HEK293 (cell line): ENCODE measurements at regions of chr11 and their contacts with region 1.

Region 1: DNA sequence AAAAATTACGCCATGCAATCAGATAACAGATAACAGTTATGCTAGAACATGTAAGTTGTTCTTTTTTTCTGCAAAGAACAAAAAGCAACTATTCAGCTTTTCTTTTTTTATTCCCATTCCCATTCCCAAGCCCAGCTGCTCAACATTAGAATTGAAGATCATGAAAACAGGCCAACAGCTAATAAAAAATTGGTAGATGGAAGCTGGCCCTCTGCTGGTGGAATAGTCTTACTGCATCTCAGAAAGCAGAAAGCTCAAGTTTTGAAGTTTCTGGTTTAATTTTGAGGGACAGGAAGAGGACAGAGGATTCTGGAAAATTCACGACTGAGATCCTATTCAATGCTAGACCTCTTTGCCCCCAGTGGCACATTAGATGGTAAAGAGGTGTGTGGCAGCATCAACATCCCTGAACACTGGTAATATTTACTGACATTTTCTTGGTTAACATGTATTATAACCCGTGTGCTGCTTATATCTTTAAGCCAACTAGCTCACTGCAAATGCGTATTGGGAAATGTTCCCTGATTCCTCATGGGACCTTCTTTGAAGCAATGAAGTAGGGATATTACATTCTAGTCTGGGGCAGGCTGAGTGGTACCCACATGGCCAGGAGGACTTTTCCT is 591.2 kb downstream of the OPCML start:
- H3K4me3 ChIP-seq: no peak overlapping the region
- H3K27ac ChIP-seq: no peak overlapping the region
- H3K4me1 ChIP-seq: no peaks in the 10 kb centered on the region
- CTCF ChIP-seq: no peak

Region 2: GRCh38 chr11:132858223-132858622 is 82.9 kb before region 1 on chr11:
- CTCF ChIA-PET with region 1: interaction called, 18 read pairs
- POLR2A ChIA-PET with region 1: no interaction called
- H3K4me3 ChIP-seq: no peak overlapping the region
- H3K27ac ChIP-seq: no peak overlapping the region
- H3K4me1 ChIP-seq: no peaks in the 10 kb centered on the region
- CTCF ChIP-seq: no peak

Region 3: DNA sequence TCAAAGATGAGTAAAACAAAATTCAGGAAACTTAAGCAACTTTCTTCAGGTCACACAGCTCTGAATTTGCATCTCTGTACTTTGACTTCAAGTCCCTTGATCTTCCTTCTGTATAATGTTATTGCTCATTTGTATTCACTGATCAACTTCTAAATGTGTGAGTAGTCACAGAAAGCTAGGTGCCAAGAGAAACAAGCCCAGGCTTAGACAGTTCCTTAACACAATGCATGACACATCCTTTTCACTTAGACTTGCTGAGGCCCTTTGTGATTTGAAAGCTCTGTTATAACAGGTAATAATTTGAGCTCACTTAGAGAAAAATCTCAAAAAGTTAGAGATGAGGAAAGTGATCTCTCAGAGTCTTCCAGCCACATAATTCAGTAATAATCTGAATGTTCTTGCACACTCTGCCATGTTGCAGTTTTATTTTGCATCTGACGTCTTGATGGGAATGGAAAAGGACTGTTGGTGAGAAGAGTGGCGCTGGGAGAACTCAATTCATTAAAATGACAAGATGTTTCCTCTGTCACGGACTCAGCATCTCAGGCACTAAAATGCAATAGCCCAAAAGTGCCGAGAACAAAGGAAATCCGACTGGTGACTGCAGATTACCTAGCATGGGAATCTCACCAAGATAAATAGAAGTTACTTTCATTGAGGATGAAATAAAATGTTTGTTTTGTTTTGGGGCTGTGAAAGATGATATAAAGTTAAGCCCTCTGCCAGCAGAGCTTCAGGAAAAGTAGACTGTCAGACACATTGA is 74.2 kb before region 1 on chr11:
- CTCF ChIA-PET with region 1: interaction called, 14 read pairs
- POLR2A ChIA-PET with region 1: no interaction called
- H3K4me3 ChIP-seq: no peak overlapping the region
- H3K27ac ChIP-seq: no peak overlapping the region
- H3K4me1 ChIP-seq: peaks cover 7% of the 10 kb centered on the region; the same call in 1 of the 2 replicates
- CTCF ChIP-seq: no peak

Region 4: GRCh38 chr11:132883241-132883640 is 57.9 kb before region 1 on chr11:
- CTCF ChIA-PET with region 1: interaction called, 10 read pairs
- POLR2A ChIA-PET with region 1: no interaction called
- H3K4me3 ChIP-seq: no peak overlapping the region
- H3K27ac ChIP-seq: no peak overlapping the region
- H3K4me1 ChIP-seq: no peaks in the 10 kb centered on the region
- CTCF ChIP-seq: no peak